Activated T-helper 2 cell treated with anti-CD3 and anti-CD28 coated beads, Interferon-gamma antibody, Interleukin-2, Interleukin-4, amounts not matched to agents 10 μg/mL and 5 μg/mL and 100 μg/mL, durations not matched to agents 14 hours and 24 hours and 36 hours (primary cell): ENCODE measurements at regions of chr2 and their contacts with region 1.

Region 1: DNA sequence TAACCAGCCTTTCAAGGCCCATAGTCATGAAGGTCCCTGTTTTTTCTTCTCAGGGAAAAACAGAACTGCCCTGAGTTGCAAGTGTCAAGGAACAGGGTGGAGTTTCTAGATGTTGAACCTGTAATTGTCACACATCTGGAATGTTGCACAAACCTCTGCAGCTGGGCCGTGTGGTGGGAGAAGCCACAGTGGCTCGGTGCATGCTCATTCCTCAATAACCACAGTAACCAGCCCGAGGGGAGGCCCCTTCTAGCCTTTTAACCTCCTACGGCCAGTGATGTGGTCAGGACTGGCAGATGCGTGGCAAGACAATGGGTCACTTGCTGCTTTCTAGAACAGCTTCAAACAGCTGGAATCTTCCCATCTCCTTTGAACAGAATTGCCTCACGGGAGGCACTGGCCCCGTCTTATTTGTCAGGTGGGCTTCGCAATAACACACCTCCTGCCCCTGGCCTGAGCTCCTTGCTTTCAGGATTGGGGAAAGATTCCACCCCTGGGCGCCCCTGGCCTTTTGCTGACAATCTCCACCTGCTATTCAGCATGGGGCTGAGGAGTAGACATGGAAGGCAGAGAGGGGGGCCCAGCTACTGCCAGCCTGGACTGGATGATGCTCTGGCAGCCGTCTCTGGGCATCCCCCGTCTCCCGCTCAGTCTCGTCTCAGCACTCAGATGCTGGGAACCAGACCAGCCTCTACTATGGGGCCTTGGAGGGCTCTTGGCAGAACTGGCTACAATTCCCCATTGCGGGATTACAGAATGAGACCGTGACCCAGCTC is 102.9 kb downstream of the KLHL29 start:
- DNase-seq: no peak
- H3K4me3 Mint-ChIP-seq: no peak overlapping the region
- H3K27ac Mint-ChIP-seq: peak overlapping the region; percentile 88
- H3K4me1 Mint-ChIP-seq: peaks cover 49% of the 10 kb centered on the region
- H3K27me3 Mint-ChIP-seq: peaks cover 10% of the 10 kb centered on the region

Region 2: GRCh38 chr2:23384551-23385349 is 103.2 kb before region 1 on chr2 and contains the start of gene KLHL29:
- intact Hi-C with region 1: loop called (anchors 5 kb)
- DNase-seq: peak; percentile 56
- H3K4me3 Mint-ChIP-seq: peak within 1 kb of the TSS; percentile 75
- H3K27ac Mint-ChIP-seq: no peak within 1 kb of the TSS
- H3K4me1 Mint-ChIP-seq: peaks cover 20% of the 10 kb centered on the region
- H3K27me3 Mint-ChIP-seq: peaks cover 70% of the 10 kb centered on the region
- total RNA-seq, gene KLHL29: 3.0 and 3.4 TPM in 2 replicates

Region 3: GRCh38 chr2:23436346-23437098 is 51.4 kb before region 1 on chr2:
- intact Hi-C with region 1: loop called (anchors 2 kb)
- DNase-seq: no peak
- H3K4me3 Mint-ChIP-seq: no peak overlapping the region
- H3K27ac Mint-ChIP-seq: no peak overlapping the region
- H3K4me1 Mint-ChIP-seq: peaks cover 9% of the 10 kb centered on the region
- H3K27me3 Mint-ChIP-seq: peaks cover 22% of the 10 kb centered on the region

Region 4: DNA sequence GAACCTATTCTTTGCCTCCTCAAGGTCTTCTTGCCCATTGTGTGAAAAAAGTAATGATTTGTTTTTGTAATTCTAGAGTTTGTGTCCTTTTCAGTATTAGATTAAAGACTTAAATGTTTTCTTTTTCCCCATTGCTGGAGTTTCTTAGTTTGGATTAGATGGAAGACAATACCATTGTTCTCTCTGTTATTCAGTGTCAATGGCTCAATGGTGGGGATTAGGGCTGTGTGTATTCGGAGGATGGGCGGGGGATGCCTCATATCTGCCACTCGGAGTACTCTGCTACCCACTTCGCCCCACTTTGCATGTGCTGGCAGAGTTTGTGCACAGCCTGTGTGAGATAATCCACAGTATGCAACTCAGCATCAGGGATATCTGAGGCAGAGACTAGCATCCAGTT is 12.9 kb before region 1 on chr2:
- intact Hi-C with region 1: no loop called
- DNase-seq: no peak
- H3K4me3 Mint-ChIP-seq: no peak overlapping the region
- H3K27ac Mint-ChIP-seq: no peak overlapping the region
- H3K4me1 Mint-ChIP-seq: no peaks in the 10 kb centered on the region
- H3K27me3 Mint-ChIP-seq: peaks cover 18% of the 10 kb centered on the region

Region 5: GRCh38 chr2:23532391-23533337 is 44.7 kb after region 1 on chr2:
- intact Hi-C with region 1: loop called (anchors 1 kb)
- DNase-seq: peak; percentile 34
- H3K4me3 Mint-ChIP-seq: peak overlapping the region; percentile 82
- H3K27ac Mint-ChIP-seq: peak overlapping the region; percentile 92
- H3K4me1 Mint-ChIP-seq: peaks cover 22% of the 10 kb centered on the region
- H3K27me3 Mint-ChIP-seq: no peaks in the 10 kb centered on the region